Calu3 (cell line): ENCODE measurements at regions of chr1 and their contacts with region 1.

Region 1: DNA sequence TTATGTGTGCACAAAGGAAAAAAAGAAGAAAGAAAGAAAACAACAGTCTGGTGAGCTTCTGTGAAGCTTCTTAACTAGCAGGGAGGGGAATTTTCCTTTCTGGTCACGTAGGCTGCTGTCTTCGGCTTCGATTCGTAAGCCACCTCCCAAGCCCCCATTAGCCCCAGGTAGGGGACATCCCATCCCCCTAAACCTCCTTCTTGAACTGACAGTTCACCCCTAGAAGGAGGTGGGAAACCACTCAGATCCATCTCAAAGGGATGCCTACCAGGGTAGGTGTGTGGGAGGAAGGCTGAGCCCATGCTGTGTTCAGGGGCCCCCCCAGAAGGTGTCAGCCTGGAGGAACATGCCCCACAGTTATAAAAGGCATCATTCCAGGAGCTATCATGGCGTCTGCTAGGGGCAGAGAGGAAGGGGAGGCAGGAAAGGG is 25.8 kb downstream of the CD247 start:
- DNase-seq: no peak
- H3K4me3 Mint-ChIP-seq: no peak overlapping the region
- H3K27ac Mint-ChIP-seq: no peak overlapping the region
- H3K4me1 Mint-ChIP-seq: no peaks in the 10 kb centered on the region
- H3K27me3 Mint-ChIP-seq: peaks cover 61% of the 10 kb centered on the region
- CTCF ChIP-seq: no peak

Region 2: GRCh38 chr1:168104535-168104934 is 612.0 kb after region 1 on chr1:
- CTCF ChIA-PET with region 1: interaction called, 13 read pairs
- intact Hi-C with region 1: no loop called
- DNase-seq: no peak
- H3K4me3 Mint-ChIP-seq: no peak overlapping the region
- H3K27ac Mint-ChIP-seq: no peak overlapping the region
- H3K4me1 Mint-ChIP-seq: no peaks in the 10 kb centered on the region
- H3K27me3 Mint-ChIP-seq: no peaks in the 10 kb centered on the region
- CTCF ChIP-seq: no peak